ENCODE measurements at regions of chr17 and their contacts with region 1.

Region 1: GRCh38 chr17:50161023-50161910 is 4.5 kb upstream of the SGCA start:
- DNase-seq: peak; percentile 88 to 99 (median 92)

Region 2: GRCh38 chr17:50094753-50095619 is 66.3 kb before region 1 on chr17 and contains the start of gene PDK2:
- intact Hi-C with region 1: loop called (anchors 2 kb)
- DNase-seq: peak; percentile 93 to 100 (median 96)

Region 3: GRCh38 chr17:50139950-50140871 is 21.1 kb before region 1 on chr17:
- intact Hi-C with region 1: loop called (anchors 1 kb)
- DNase-seq: peak in 9 of 10 donors; percentile 66 to 97 (median 84)